ENCODE measurements at regions of chr4 and their contacts with region 1.

Region 1: GRCh38 chr4:108385076-108385475 is 216.3 kb upstream of the LEF1 start:
- DNase-seq: no peak
- H3K4me3 Mint-ChIP-seq: no peak overlapping the region
- H3K27ac Mint-ChIP-seq: no peak overlapping the region
- H3K4me1 Mint-ChIP-seq: no peaks in the 10 kb centered on the region
- H3K27me3 Mint-ChIP-seq: peaks cover 19% of the 10 kb centered on the region

Region 2: GRCh38 chr4:107500551-107500950 is 884.5 kb before region 1 on chr4:
- intact Hi-C with region 1: loop called (anchors 5 kb)
- DNase-seq: no peak
- H3K4me3 Mint-ChIP-seq: no peak overlapping the region
- H3K27ac Mint-ChIP-seq: no peak overlapping the region
- H3K4me1 Mint-ChIP-seq: peaks cover 7% of the 10 kb centered on the region
- H3K27me3 Mint-ChIP-seq: no peaks in the 10 kb centered on the region

Region 3: DNA sequence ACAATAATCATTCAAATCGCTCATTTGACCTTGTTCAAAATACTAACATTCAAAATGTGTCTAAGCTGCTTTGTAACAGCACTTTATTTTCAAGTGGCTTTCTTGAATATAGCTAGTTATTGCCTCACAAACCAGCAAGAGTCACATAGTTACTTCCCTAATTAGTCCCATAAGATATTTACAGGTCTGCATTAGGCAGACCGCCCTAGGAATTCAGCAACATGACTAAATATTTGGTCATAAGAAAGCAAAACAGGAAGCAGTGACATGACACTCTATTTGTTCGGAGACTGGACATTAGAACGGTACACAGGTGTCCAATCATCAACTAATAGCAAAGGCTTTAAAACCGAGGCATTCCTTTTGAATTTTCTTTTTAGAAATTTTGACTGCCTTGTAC is 655.4 kb after region 1 on chr4:
- intact Hi-C with region 1: no loop called
- DNase-seq: no peak
- H3K4me3 Mint-ChIP-seq: no peak overlapping the region
- H3K27ac Mint-ChIP-seq: no peak overlapping the region
- H3K4me1 Mint-ChIP-seq: no peaks in the 10 kb centered on the region
- H3K27me3 Mint-ChIP-seq: peaks cover 4% of the 10 kb centered on the region

Region 4: DNA sequence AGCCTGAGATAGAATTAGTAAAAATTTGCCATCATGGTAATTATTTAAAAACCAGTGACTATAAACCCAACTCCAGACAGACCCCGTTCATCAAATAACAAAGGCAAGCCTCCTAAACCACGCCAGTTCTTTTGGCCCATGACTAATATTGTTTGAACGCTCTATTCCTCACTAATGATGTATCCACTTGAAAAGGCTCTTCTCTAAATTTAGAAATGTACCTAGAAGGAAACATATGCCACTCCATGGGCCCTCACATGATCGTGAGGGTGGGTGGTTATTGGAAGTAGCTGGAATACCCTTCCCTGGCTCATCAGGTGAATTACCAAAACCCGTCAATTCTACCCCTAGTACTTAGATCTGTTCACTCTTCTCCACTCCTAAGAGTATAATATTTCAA is 668.2 kb after region 1 on chr4:
- intact Hi-C with region 1: no loop called
- DNase-seq: no peak
- H3K4me3 Mint-ChIP-seq: no peak overlapping the region
- H3K27ac Mint-ChIP-seq: no peak overlapping the region
- H3K4me1 Mint-ChIP-seq: no peaks in the 10 kb centered on the region
- H3K27me3 Mint-ChIP-seq: peaks cover 7% of the 10 kb centered on the region

Measured in activated T-helper 1 cell treated with anti-CD3 and anti-CD28 coated beads, Interleukin-12 subunit alpha, Interleukin-12 subunit beta, Interleukin-2, Interleukin-4 antibody, amounts not matched to agents 30 ng/mL and 10 ng/mL and 1 ng/mL, durations not matched to agents 14 hours and 24 hours and 36 hours (primary cell).